Caco-2 (cell line): ENCODE measurements at regions of chr2 and their contacts with region 1.

Region 1: DNA sequence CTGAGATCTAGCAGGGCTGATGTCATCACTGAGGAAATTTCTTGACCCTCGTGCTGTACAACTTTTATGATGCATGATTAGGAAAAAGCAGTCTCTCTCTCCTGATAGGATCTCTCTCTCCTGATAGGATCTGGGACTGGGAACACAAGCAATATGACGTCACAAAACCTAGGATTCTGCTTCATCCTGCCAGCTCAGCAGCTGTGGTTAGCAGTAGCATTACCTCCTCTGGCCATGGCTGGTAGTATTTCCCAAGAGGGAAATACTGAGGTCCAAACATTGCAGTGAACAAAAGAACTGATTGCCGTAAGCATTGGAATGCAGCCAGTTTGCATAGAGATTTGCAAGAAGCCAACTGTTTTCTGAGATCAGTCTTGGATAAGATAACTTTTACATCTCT is 521.2 kb upstream of the POU3F3 start:
- DNase-seq: peak; percentile 51 to 54
- H3K4me3 ChIP-seq: no peak overlapping the region
- H3K4me3 Mint-ChIP-seq: no peak overlapping the region
- H3K27ac Mint-ChIP-seq: no peak overlapping the region
- H3K4me1 ChIP-seq: peaks cover 21% of the 10 kb centered on the region; the same call in 1 of the 2 replicates
- H3K4me1 Mint-ChIP-seq: peaks cover 7% of the 10 kb centered on the region
- H3K27me3 ChIP-seq: no peaks in the 10 kb centered on the region
- H3K27me3 Mint-ChIP-seq: no peaks in the 10 kb centered on the region
- CTCF ChIP-seq: no peak

Region 2: GRCh38 chr2:103773884-103774283 is 558.9 kb before region 1 on chr2:
- CTCF ChIA-PET with region 1: no interaction called
- POLR2A ChIA-PET with region 1: no interaction called
- intact Hi-C with region 1: no loop called
- DNase-seq: no peak
- H3K4me3 ChIP-seq: no peak overlapping the region
- H3K4me3 Mint-ChIP-seq: no peak overlapping the region
- H3K27ac Mint-ChIP-seq: no peak overlapping the region
- H3K4me1 ChIP-seq: no peaks in the 10 kb centered on the region
- H3K4me1 Mint-ChIP-seq: no peaks in the 10 kb centered on the region
- H3K27me3 ChIP-seq: no peaks in the 10 kb centered on the region
- H3K27me3 Mint-ChIP-seq: no peaks in the 10 kb centered on the region
- CTCF ChIP-seq: no peak

Region 3: DNA sequence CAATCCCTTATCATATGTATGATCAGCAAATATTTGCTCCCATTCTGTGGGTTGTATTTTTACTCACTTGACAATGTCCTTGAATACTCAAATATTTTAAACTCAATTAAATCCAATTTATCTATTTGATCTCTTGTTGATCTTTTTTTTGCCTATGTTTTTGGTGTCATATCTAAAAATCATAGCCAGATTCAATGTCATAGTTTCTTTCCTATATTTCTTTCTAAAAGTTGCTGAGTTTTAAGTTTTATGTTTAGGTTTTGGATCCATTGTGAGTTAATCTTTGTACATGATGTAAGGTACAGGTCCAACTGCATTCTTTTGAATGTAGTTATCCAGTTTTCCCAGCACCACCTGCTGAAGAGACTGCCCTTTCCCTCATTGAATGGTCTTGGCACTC is 221.5 kb before region 1 on chr2:
- CTCF ChIA-PET with region 1: no interaction called
- POLR2A ChIA-PET with region 1: no interaction called
- intact Hi-C with region 1: loop called (anchors 10 kb)
- DNase-seq: peak in 1 of 2 experiments; percentile 17
- H3K4me3 ChIP-seq: no peak overlapping the region
- H3K4me3 Mint-ChIP-seq: no peak overlapping the region
- H3K27ac Mint-ChIP-seq: no peak overlapping the region
- H3K4me1 ChIP-seq: no peaks in the 10 kb centered on the region
- H3K4me1 Mint-ChIP-seq: peaks cover 9% of the 10 kb centered on the region
- H3K27me3 ChIP-seq: no peaks in the 10 kb centered on the region
- H3K27me3 Mint-ChIP-seq: no peaks in the 10 kb centered on the region
- CTCF ChIP-seq: no peak